Activated CD4-positive, alpha-beta memory T cell treated with anti-CD3 and anti-CD28 coated beads, Interleukin-2, amount 10 ng/mL, durations not matched to agents 7 days and 5 days (primary cell): ENCODE measurements at regions of chr14 and their contacts with region 1.

Region 1: GRCh38 chr14:58427281-58428117 is at the starts of genes KIAA0586 and TIMM9:
- DNase-seq: peak; percentile 97
- H3K4me3 Mint-ChIP-seq: peak within 1 kb of the TSS; percentile 93
- H3K27ac Mint-ChIP-seq: peak within 1 kb of the TSS; percentile 97
- H3K4me1 Mint-ChIP-seq: peaks cover 46% of the 10 kb centered on the region
- H3K27me3 Mint-ChIP-seq: no peaks in the 10 kb centered on the region
- total RNA-seq, gene KIAA0586: 31.7 to 34.6 TPM
- total RNA-seq, gene TIMM9: 37.5 to 40.3 TPM

Region 2: GRCh38 chr14:58189176-58189575 is 238.3 kb before region 1 on chr14:
- CTCF ChIA-PET with region 1: no interaction called
- POLR2A ChIA-PET with region 1: no interaction called
- DNase-seq: no peak
- H3K4me3 Mint-ChIP-seq: no peak overlapping the region
- H3K27ac Mint-ChIP-seq: no peak overlapping the region
- H3K4me1 Mint-ChIP-seq: no peaks in the 10 kb centered on the region
- H3K27me3 Mint-ChIP-seq: peaks cover 8% of the 10 kb centered on the region

Region 3: GRCh38 chr14:58199726-58200479 is 227.6 kb before region 1 on chr14 and contains the start of gene ACTR10:
- CTCF ChIA-PET with region 1: no interaction called
- POLR2A ChIA-PET with region 1: interaction called, 11 read pairs
- DNase-seq: peak; percentile 86
- H3K4me3 Mint-ChIP-seq: peak within 1 kb of the TSS; percentile 95
- H3K27ac Mint-ChIP-seq: peak within 1 kb of the TSS; percentile 92
- H3K4me1 Mint-ChIP-seq: peaks cover 38% of the 10 kb centered on the region
- H3K27me3 Mint-ChIP-seq: no peaks in the 10 kb centered on the region
- total RNA-seq, gene ACTR10: 42.3 to 49.2 TPM

Region 4: GRCh38 chr14:58395812-58396788 is 31.4 kb before region 1 on chr14 and contains the start of gene TOMM20L:
- CTCF ChIA-PET with region 1: interaction called, 26 read pairs
- POLR2A ChIA-PET with region 1: interaction called, 32 read pairs
- DNase-seq: peak; percentile 76
- H3K4me3 Mint-ChIP-seq: peak within 1 kb of the TSS; percentile 67
- H3K27ac Mint-ChIP-seq: peak within 1 kb of the TSS; percentile 32
- H3K4me1 Mint-ChIP-seq: peaks cover 13% of the 10 kb centered on the region
- H3K27me3 Mint-ChIP-seq: no peaks in the 10 kb centered on the region
- total RNA-seq, gene TOMM20L: not detected

Region 5: GRCh38 chr14:58560208-58560607 is 132.7 kb after region 1 on chr14:
- CTCF ChIA-PET with region 1: no interaction called
- POLR2A ChIA-PET with region 1: no interaction called
- DNase-seq: no peak
- H3K4me3 Mint-ChIP-seq: no peak overlapping the region
- H3K27ac Mint-ChIP-seq: no peak overlapping the region
- H3K4me1 Mint-ChIP-seq: no peaks in the 10 kb centered on the region
- H3K27me3 Mint-ChIP-seq: no peaks in the 10 kb centered on the region